ENCODE measurements at regions of chr18 and their contacts with region 1.

Region 1: GRCh38 chr18:76686737-76687262 is 135.6 kb upstream of the ZNF236 start:
- DNase-seq: peak; percentile 57
- ATAC-seq: peak; percentile 97
- H3K4me3 ChIP-seq: no peak overlapping the region
- H3K27ac ChIP-seq: no peak overlapping the region
- H3K4me1 ChIP-seq: no peaks in the 10 kb centered on the region; the same call in 1 of the 2 replicates
- H3K27me3 ChIP-seq: peaks cover 44% of the 10 kb centered on the region
- CTCF ChIP-seq: peak; percentile 73
- POLR2A ChIP-seq: no peak
- RAD21 ChIP-seq: peak; percentile 80

Region 2: GRCh38 chr18:76528477-76529432 is 158.0 kb before region 1 on chr18:
- CTCF ChIA-PET with region 1: no interaction called
- POLR2A ChIA-PET with region 1: no interaction called
- dilution Hi-C with region 1: no loop called
- in situ Hi-C with region 1: no loop called
- intact Hi-C with region 1: no loop called
- DNase-seq: peak; percentile 83
- ATAC-seq: peak; percentile 75
- H3K4me3 ChIP-seq: peak overlapping the region; percentile 20
- H3K27ac ChIP-seq: peak overlapping the region; percentile 59
- H3K4me1 ChIP-seq: peaks cover 5% of the 10 kb centered on the region; the same call in 1 of the 2 replicates
- H3K27me3 ChIP-seq: no peaks in the 10 kb centered on the region
- CTCF ChIP-seq: 0 out of 2 replicates have a peak, but pooled peaks have one; percentile 6
- POLR2A ChIP-seq: no peak
- RAD21 ChIP-seq: no peak

Region 3: DNA sequence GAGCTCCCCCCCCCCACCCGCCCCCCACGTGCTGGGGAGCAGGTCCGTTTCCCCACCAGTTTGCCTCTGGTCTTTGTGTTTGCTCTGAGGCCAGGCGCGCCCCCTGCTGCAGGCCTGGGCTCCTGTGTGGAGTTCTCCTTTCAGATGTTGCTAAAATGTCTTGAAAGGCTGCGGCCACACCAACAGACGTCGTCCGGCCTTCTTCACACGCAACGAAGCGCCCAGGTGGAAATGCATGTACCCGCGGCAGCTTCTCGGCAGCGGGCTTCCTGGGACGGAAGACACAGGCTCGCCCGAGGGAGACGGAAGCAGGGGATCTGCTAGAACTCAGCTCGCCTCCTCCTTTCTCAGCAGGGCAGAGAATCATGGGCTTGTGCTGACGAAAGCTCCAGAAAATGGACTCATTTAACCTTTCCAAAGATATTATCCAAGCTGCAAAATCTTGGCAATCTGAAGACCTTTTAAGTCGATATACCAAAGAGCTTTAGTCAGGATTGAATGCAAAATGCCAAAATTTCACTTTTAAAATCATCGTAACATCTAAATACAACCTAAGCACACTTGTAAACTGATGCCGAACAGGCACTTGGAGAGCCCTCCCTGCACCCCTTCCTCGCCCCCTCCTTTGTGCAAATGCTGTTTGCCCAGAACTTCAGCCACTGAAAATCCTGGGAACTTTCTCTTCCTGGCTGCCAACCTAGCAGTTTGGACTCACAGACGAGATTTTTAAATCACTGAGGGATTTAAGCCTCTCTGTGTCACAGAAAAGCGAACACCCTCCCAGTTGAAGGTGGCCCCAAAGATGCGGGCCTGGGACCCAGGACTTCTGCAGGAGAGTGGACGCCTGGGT is 66.3 kb before region 1 on chr18:
- CTCF ChIA-PET with region 1: no interaction called
- POLR2A ChIA-PET with region 1: no interaction called
- dilution Hi-C with region 1: no loop called
- in situ Hi-C with region 1: no loop called
- intact Hi-C with region 1: loop called (anchors 5 kb)
- DNase-seq: peak; percentile 77
- ATAC-seq: peak; percentile 88
- H3K4me3 ChIP-seq: peak overlapping the region; percentile 15; the same call in 1 of the 2 replicates
- H3K27ac ChIP-seq: peak overlapping the region; percentile 55
- H3K4me1 ChIP-seq: peaks cover 19% of the 10 kb centered on the region
- H3K27me3 ChIP-seq: no peaks in the 10 kb centered on the region
- CTCF ChIP-seq: peak; percentile 66
- POLR2A ChIP-seq: no peak
- RAD21 ChIP-seq: peak; percentile 62

Region 4: DNA sequence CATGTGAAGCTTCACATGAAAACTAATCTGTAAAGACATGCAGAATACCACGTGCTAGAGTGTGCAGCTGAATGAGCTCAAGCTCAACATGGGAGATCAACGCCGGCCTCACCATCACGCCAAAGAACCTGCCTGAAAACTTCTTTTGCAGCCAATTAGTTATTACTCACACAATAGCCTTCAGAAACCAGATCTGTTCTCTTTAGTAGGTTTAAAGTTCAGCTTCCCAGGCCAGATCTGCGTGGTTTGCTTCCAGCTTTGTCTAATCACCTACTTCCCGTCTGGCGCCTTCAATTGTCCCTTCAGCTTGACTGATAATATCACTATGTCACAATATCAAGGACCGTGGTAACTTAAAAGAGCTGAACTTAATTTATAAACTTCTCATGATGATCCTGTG is 67.6 kb after region 1 on chr18:
- CTCF ChIA-PET with region 1: no interaction called
- POLR2A ChIA-PET with region 1: no interaction called
- dilution Hi-C with region 1: no loop called
- in situ Hi-C with region 1: no loop called
- intact Hi-C with region 1: no loop called
- DNase-seq: no peak
- ATAC-seq: no peak
- H3K4me3 ChIP-seq: no peak overlapping the region
- H3K27ac ChIP-seq: no peak overlapping the region
- H3K4me1 ChIP-seq: no peaks in the 10 kb centered on the region
- H3K27me3 ChIP-seq: no peaks in the 10 kb centered on the region; the same call in 1 of the 2 replicates
- CTCF ChIP-seq: no peak
- POLR2A ChIP-seq: no peak
- RAD21 ChIP-seq: no peak

Measured in IMR-90 (cell line).